Calu3 (cell line): ENCODE measurements at regions of chr5 and their contacts with region 1.

Region 1: GRCh38 chr5:160439205-160439600 is 17.5 kb downstream of the PTTG1 start:
- DNase-seq: peak; percentile 95
- H3K4me3 Mint-ChIP-seq: peak overlapping the region; percentile 64
- H3K27ac Mint-ChIP-seq: no peak overlapping the region
- H3K4me1 Mint-ChIP-seq: peaks cover 29% of the 10 kb centered on the region
- H3K27me3 Mint-ChIP-seq: peaks cover 17% of the 10 kb centered on the region
- CTCF ChIP-seq: peak; percentile 92

Region 2: GRCh38 chr5:160458806-160459800 is 19.9 kb after region 1 on chr5:
- CTCF ChIA-PET with region 1: interaction called, 25 read pairs
- intact Hi-C with region 1: loop called (anchors 1 kb)
- DNase-seq: no peak
- H3K4me3 Mint-ChIP-seq: no peak overlapping the region
- H3K27ac Mint-ChIP-seq: peak overlapping the region; percentile 50
- H3K4me1 Mint-ChIP-seq: peaks cover 19% of the 10 kb centered on the region
- H3K27me3 Mint-ChIP-seq: no peaks in the 10 kb centered on the region
- CTCF ChIP-seq: no peak

Region 3: GRCh38 chr5:160486573-160486972 is 47.4 kb after region 1 on chr5:
- CTCF ChIA-PET with region 1: interaction called, 13 read pairs
- intact Hi-C with region 1: loop called (anchors 5 kb)
- DNase-seq: no peak
- H3K4me3 Mint-ChIP-seq: no peak overlapping the region
- H3K27ac Mint-ChIP-seq: peak overlapping the region; percentile 36
- H3K4me1 Mint-ChIP-seq: peaks cover 30% of the 10 kb centered on the region
- H3K27me3 Mint-ChIP-seq: no peaks in the 10 kb centered on the region
- CTCF ChIP-seq: no peak

Region 4: DNA sequence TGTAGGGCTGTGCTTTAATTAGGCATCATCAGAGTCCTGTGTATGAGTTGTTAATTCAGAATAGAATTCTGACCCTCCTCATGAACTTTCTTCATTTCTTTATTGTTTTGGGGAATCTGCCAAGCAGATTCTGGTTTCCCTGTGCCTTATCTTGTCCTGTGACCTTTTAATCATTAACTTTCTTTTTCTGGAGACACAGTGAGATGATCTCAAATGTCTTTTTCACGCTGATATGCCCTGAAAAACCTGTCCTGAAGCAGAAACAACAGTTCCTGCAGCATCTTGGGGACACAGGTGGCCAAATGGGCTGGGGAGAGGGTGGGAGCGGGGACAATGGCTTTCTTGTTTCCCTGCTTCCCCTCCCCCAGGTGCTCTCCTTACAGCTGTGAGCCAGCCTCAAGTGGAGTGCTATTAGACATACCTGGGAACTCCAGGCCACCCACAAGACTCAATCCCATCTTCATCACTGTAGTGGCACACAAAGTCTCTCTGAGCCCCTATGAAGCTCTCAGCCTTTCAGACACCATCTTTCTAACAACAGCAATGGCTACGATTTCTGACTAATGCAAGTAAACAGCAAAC is 199.0 kb after region 1 on chr5:
- CTCF ChIA-PET with region 1: no interaction called
- intact Hi-C with region 1: loop called (anchors 10 kb)
- DNase-seq: peak; percentile 50
- H3K4me3 Mint-ChIP-seq: no peak overlapping the region
- H3K27ac Mint-ChIP-seq: no peak overlapping the region
- H3K4me1 Mint-ChIP-seq: peaks cover 27% of the 10 kb centered on the region
- H3K27me3 Mint-ChIP-seq: peaks cover 17% of the 10 kb centered on the region
- CTCF ChIP-seq: no peak

Region 5: DNA sequence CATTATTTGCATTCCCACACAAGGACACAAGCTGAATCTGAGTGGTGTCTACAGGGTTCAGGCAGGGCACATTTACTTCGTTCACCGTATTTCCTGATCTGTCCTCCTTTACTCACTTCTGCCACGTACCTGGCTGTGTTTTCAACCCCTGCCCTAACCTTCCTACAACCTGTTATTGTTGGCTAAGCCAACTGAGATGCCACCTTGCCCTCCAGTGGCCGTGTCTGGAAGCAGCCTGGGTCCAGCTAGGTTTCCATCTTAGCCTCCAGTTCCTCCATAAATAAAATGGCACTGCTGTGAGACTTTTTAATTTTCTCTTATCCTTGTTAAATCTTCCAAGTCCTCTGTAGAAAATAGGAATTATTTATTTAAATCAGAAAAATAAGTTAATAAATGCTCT is 348.0 kb after region 1 on chr5:
- CTCF ChIA-PET with region 1: interaction called, 19 read pairs
- intact Hi-C with region 1: loop called (anchors 1 kb)
- DNase-seq: peak; percentile 78
- H3K4me3 Mint-ChIP-seq: peak overlapping the region; percentile 1
- H3K27ac Mint-ChIP-seq: no peak overlapping the region
- H3K4me1 Mint-ChIP-seq: peaks cover 12% of the 10 kb centered on the region
- H3K27me3 Mint-ChIP-seq: no peaks in the 10 kb centered on the region
- CTCF ChIP-seq: peak; percentile 73